GM13976 (cell line): ENCODE measurements at regions of chr17 and their contacts with region 1.

Region 1: GRCh38 chr17:59004338-59005111 is 102.2 kb downstream of the TRIM37 start:
- DNase-seq: peak; percentile 55
- CTCF ChIP-seq: peak; percentile 73

Region 2: GRCh38 chr17:58587702-58588254 is 416.7 kb before region 1 on chr17:
- in situ Hi-C with region 1: loop called (anchors 25 kb)
- DNase-seq: peak; percentile 74
- CTCF ChIP-seq: peak; percentile 76

Region 3: GRCh38 chr17:58710936-58711775 is 293.4 kb before region 1 on chr17:
- in situ Hi-C with region 1: loop called (anchors 10 kb)
- DNase-seq: peak; percentile 40
- CTCF ChIP-seq: peak; percentile 42

Region 4: GRCh38 chr17:59178266-59178978 is 173.9 kb after region 1 on chr17:
- in situ Hi-C with region 1: no loop called
- DNase-seq: no peak
- CTCF ChIP-seq: no peak